ENCODE measurements at regions of chr1 and their contacts with region 1.

Region 1: GRCh38 chr1:19485362-19486187 is at the start of gene CAPZB:
- DNase-seq: peak; percentile 89 to 97 (median 96)
- ATAC-seq: peak; percentile 81
- H3K4me3 ChIP-seq: peak within 1 kb of the TSS; percentile 78
- H3K4me3 Mint-ChIP-seq: peak within 1 kb of the TSS; percentile 94
- H3K27ac ChIP-seq: peak within 1 kb of the TSS; percentile 80 to 88
- H3K27ac Mint-ChIP-seq: peak within 1 kb of the TSS; percentile 97
- H3K4me1 ChIP-seq: peaks cover 68% of the 10 kb centered on the region
- H3K4me1 Mint-ChIP-seq: peaks cover 68% of the 10 kb centered on the region
- H3K27me3 ChIP-seq: no peaks in the 10 kb centered on the region
- H3K27me3 Mint-ChIP-seq: no peaks in the 10 kb centered on the region
- CTCF ChIP-seq: no peak
- total RNA-seq, gene CAPZB: 168 to 173 TPM

Region 2: GRCh38 chr1:19251305-19252196 is 234.0 kb before region 1 on chr1 and contains the starts of genes EMC1 and MRTO4:
- CTCF ChIA-PET with region 1: no interaction called
- POLR2A ChIA-PET with region 1: no interaction called
- intact Hi-C with region 1: loop called in 1 of 2 experiments (anchors 5 kb)
- DNase-seq: peak; percentile 79 to 92 (median 86)
- ATAC-seq: peak; percentile 93
- H3K4me3 ChIP-seq: peak within 1 kb of the TSS; percentile 80
- H3K4me3 Mint-ChIP-seq: peak within 1 kb of the TSS; percentile 96
- H3K27ac ChIP-seq: peak within 1 kb of the TSS; percentile 93 to 95
- H3K27ac Mint-ChIP-seq: peak within 1 kb of the TSS; percentile 94
- H3K4me1 ChIP-seq: peaks cover 40% of the 10 kb centered on the region
- H3K4me1 Mint-ChIP-seq: peaks cover 34% of the 10 kb centered on the region
- H3K27me3 ChIP-seq: no peaks in the 10 kb centered on the region
- H3K27me3 Mint-ChIP-seq: no peaks in the 10 kb centered on the region
- CTCF ChIP-seq: no peak
- total RNA-seq, gene EMC1: 21.9 to 22.2 TPM
- total RNA-seq, gene MRTO4: 10.2 to 12.0 TPM

Region 3: DNA sequence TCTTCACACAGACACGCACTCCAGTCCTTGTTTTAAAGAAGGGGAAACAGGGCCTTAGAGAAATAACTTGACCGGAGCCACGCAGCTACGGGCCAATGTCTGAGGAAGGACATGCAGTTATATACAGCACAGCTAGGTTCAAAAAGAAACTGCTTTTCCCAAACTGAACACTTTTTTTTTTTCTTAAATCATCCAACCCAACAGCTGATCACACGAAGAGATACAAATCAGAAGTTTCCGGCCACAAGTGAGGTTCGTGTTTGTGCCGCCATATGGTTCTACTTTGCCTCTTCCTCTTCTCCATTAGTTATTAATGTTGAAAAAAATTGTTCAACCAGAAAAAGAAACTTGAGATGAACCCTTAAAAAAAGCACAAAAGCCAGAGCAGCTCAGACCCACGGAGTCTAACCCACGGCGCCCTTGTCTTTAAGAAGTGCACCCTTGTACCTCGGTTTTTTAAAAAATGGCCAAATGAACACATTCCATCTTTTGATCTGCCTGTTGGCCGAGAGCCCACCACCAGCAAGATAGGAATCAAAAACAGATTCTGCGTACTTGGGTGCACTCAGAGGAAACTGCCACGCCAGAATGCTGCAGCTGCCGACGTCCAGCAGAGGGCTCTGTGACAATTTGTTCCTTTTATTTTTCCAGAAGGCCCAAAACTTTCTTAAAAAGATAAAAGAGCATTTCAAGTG is 94.5 kb before region 1 on chr1:
- CTCF ChIA-PET with region 1: interaction called, 6 read pairs
- POLR2A ChIA-PET with region 1: interaction called, 21 read pairs
- intact Hi-C with region 1: loop called (anchors 2 kb)
- DNase-seq: peak; percentile 31 to 91 (median 62)
- ATAC-seq: peak; percentile 76
- H3K4me3 ChIP-seq: peak overlapping the region; percentile 51
- H3K4me3 Mint-ChIP-seq: peak overlapping the region; percentile 92
- H3K27ac ChIP-seq: peak overlapping the region; percentile 46 to 62
- H3K27ac Mint-ChIP-seq: peak overlapping the region; percentile 94
- H3K4me1 ChIP-seq: peaks cover 92% of the 10 kb centered on the region
- H3K4me1 Mint-ChIP-seq: peaks cover 86% of the 10 kb centered on the region
- H3K27me3 ChIP-seq: no peaks in the 10 kb centered on the region
- H3K27me3 Mint-ChIP-seq: no peaks in the 10 kb centered on the region
- CTCF ChIP-seq: peak; percentile 90

Region 4: GRCh38 chr1:19448491-19449439 is 36.8 kb before region 1 on chr1:
- CTCF ChIA-PET with region 1: interaction called, 10 read pairs
- POLR2A ChIA-PET with region 1: interaction called, 7 read pairs
- intact Hi-C with region 1: loop called (anchors 5 kb)
- DNase-seq: peak in 3 of 14 experiments; percentile 19 to 55 (median 47)
- ATAC-seq: no peak
- H3K4me3 ChIP-seq: no peak overlapping the region
- H3K4me3 Mint-ChIP-seq: peak overlapping the region; percentile 54
- H3K27ac ChIP-seq: no peak overlapping the region
- H3K27ac Mint-ChIP-seq: peak overlapping the region; percentile 89
- H3K4me1 ChIP-seq: peaks cover 78% of the 10 kb centered on the region
- H3K4me1 Mint-ChIP-seq: peaks cover 88% of the 10 kb centered on the region
- H3K27me3 ChIP-seq: no peaks in the 10 kb centered on the region
- H3K27me3 Mint-ChIP-seq: no peaks in the 10 kb centered on the region
- CTCF ChIP-seq: no peak

Region 5: DNA sequence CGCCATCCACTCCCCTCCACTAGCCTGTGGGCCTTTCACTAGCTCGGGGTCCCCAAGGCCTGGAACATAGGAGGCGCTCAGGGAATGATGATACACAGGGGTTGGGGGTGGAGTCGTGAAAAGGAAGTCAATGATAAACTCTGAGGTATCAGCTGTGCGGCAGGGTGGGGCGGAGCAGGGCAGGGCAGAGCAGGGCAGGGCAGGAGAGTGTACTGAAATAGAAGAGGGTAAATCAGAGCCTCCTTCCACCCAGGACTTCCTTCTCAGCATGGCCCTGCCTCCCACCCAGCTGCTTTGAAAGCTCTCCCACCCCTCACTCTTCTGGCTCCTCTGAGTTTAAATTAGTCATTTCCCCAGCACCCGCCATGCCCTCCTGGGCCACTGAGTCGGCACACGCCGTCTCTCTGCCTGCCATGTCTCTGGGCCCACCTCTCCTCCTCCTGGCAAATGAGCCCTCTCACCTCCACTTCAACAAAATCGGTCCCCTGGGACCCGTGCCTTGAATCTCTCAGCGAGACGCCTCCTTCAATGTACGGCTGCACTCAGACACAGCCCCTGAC is 17.1 kb before region 1 on chr1:
- CTCF ChIA-PET with region 1: interaction called, 6 read pairs
- POLR2A ChIA-PET with region 1: interaction called, 442 read pairs
- intact Hi-C with region 1: loop called (anchors 1 kb)
- DNase-seq: peak; percentile 48 to 89 (median 74)
- ATAC-seq: peak; percentile 87
- H3K4me3 ChIP-seq: peak overlapping the region; percentile 15
- H3K4me3 Mint-ChIP-seq: peak overlapping the region; percentile 42
- H3K27ac ChIP-seq: peak overlapping the region; percentile 73 to 74
- H3K27ac Mint-ChIP-seq: peak overlapping the region; percentile 86
- H3K4me1 ChIP-seq: peaks cover 100% of the 10 kb centered on the region
- H3K4me1 Mint-ChIP-seq: peaks cover 93% of the 10 kb centered on the region
- H3K27me3 ChIP-seq: no peaks in the 10 kb centered on the region
- H3K27me3 Mint-ChIP-seq: no peaks in the 10 kb centered on the region
- CTCF ChIP-seq: no peak

Region 6: GRCh38 chr1:19651141-19651737 is 165.7 kb after region 1 on chr1:
- CTCF ChIA-PET with region 1: interaction called, 10 read pairs
- POLR2A ChIA-PET with region 1: interaction called, 4 read pairs
- intact Hi-C with region 1: loop called (anchors 2 to 5 kb)
- DNase-seq: peak in 11 of 14 experiments; percentile 24 to 77 (median 53)
- ATAC-seq: peak; percentile 64
- H3K4me3 ChIP-seq: no peak overlapping the region
- H3K4me3 Mint-ChIP-seq: no peak overlapping the region
- H3K27ac ChIP-seq: no peak overlapping the region
- H3K27ac Mint-ChIP-seq: no peak overlapping the region
- H3K4me1 ChIP-seq: peaks cover 38% of the 10 kb centered on the region
- H3K4me1 Mint-ChIP-seq: peaks cover 25% of the 10 kb centered on the region
- H3K27me3 ChIP-seq: no peaks in the 10 kb centered on the region
- H3K27me3 Mint-ChIP-seq: peaks cover 4% of the 10 kb centered on the region
- CTCF ChIP-seq: peak; percentile 57